AG04449 (cell line): ENCODE measurements at regions of chr4 and their contacts with region 1.

Region 1: GRCh38 chr4:139295206-139295941 is 5.9 kb upstream of the NAA15 start:
- DNase-seq: peak; percentile 63
- H3K4me3 ChIP-seq: peak overlapping the region; percentile 76
- CTCF ChIP-seq: peak; percentile 97

Region 2: DNA sequence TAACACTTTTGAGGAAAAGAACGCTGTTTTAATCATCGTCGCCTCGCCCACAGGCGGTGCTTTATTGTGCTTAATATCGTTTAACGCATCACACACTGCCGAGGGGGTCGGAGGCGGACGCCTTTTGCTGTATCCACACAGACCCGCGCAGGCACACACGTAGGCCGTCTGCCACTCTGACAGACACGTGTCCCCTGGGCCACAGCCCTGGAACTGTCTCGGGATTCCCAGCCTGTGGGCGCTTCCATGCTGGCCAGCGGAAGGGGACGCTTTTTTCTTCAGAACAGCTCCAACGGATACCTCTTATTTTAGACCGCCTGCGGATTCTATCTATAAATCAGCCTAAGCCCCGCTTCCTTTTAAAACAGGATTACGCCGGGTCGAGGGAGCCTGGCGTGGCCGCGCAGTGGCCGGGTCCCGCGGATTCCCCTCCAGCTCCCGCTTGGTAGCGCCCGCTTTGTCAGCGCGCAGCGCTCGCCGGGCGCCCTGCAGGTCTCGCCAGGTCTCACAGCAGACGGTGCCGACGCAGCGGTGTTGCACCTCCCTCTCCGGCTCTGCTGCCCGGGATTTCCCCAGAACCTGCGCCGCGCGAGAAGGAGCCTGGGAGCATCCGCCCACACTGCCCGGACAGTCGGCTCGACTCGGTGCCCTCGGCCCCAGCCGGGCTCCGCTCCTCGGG is 280.0 kb before region 1 on chr4 and contains the start of gene NOCT:
- CTCF ChIA-PET with region 1: no interaction called
- POLR2A ChIA-PET with region 1: no interaction called
- DNase-seq: peak; percentile 49
- H3K4me3 ChIP-seq: peak within 1 kb of the TSS; percentile 76
- CTCF ChIP-seq: no peak

Region 3: GRCh38 chr4:139099366-139099982 is 195.9 kb before region 1 on chr4:
- CTCF ChIA-PET with region 1: interaction called, 22 read pairs
- POLR2A ChIA-PET with region 1: no interaction called
- DNase-seq: no peak
- H3K4me3 ChIP-seq: no peak overlapping the region
- CTCF ChIP-seq: peak; percentile 85

Region 4: DNA sequence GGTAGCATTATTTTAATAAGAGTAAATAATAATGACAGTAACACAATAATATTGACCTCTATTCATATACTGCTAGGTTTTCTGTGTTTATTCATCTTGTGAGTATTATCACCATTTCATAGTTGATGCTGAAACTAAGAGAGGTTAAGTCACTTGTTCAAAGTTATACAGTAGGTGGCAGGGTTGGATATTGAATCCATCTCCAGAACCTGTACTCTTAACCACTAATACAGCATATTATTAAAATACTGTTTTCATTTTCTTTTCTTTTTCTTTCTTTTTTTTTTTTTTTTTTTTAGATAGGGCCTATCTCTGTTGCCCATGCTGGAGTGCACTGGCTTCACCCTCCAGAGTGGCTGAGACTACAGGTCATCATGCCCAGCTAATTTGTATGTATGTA is 111.2 kb before region 1 on chr4:
- CTCF ChIA-PET with region 1: interaction called, 11 read pairs
- POLR2A ChIA-PET with region 1: no interaction called
- DNase-seq: no peak
- H3K4me3 ChIP-seq: no peak overlapping the region
- CTCF ChIP-seq: peak; percentile 6

Region 5: GRCh38 chr4:139229534-139230039 is 65.8 kb before region 1 on chr4:
- CTCF ChIA-PET with region 1: interaction called, 24 read pairs
- POLR2A ChIA-PET with region 1: no interaction called
- DNase-seq: no peak
- H3K4me3 ChIP-seq: no peak overlapping the region
- CTCF ChIP-seq: peak; percentile 47

Region 6: GRCh38 chr4:139279760-139280620 is 15.4 kb before region 1 on chr4 and contains the start of gene MGARP:
- CTCF ChIA-PET with region 1: interaction called, 36 read pairs
- POLR2A ChIA-PET with region 1: interaction called, 3 read pairs
- DNase-seq: no peak
- H3K4me3 ChIP-seq: peak within 1 kb of the TSS; percentile 64
- CTCF ChIP-seq: no peak

Region 7: DNA sequence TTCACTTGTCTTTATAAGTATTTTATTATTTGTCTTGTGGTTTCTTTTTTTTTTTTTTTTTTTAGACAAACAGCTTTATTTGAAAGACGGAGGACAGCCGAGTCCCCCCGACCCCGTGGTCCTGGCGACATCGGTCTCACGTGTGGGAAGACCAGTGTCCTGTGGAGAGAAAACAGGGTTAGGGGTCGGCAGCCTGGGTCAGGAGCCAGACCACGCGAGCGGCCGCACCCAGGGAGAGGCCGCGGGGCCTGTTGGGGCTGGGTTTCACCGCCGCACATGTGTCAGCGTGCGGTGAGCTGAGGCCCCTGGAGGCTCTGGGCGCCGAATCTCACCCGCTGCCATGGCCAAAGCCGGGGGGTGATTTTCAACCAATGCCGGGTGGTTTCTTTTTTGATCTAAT is 140.7 kb after region 1 on chr4:
- CTCF ChIA-PET with region 1: no interaction called
- POLR2A ChIA-PET with region 1: no interaction called
- DNase-seq: no peak
- H3K4me3 ChIP-seq: no peak overlapping the region
- CTCF ChIP-seq: no peak